HCT116 (cell line): ENCODE measurements at regions of chr17 and their contacts with region 1.

Region 1: GRCh38 chr17:64306850-64307463 is 43.9 kb upstream of the TEX2 start:
- DNase-seq: peak; percentile 70
- ATAC-seq: peak; percentile 83
- H3K4me3 ChIP-seq: no peak overlapping the region
- H3K27ac ChIP-seq: no peak overlapping the region
- H3K4me1 ChIP-seq: peaks cover 7 to 13% of the 10 kb centered on the region in 2 experiments
- H3K27me3 ChIP-seq: no peaks in the 10 kb centered on the region
- CTCF ChIP-seq: peak; percentile 90 to 99 (median 91)
- POLR2A ChIP-seq: no peak
- RAD21 ChIP-seq: peak; percentile 80

Region 2: DNA sequence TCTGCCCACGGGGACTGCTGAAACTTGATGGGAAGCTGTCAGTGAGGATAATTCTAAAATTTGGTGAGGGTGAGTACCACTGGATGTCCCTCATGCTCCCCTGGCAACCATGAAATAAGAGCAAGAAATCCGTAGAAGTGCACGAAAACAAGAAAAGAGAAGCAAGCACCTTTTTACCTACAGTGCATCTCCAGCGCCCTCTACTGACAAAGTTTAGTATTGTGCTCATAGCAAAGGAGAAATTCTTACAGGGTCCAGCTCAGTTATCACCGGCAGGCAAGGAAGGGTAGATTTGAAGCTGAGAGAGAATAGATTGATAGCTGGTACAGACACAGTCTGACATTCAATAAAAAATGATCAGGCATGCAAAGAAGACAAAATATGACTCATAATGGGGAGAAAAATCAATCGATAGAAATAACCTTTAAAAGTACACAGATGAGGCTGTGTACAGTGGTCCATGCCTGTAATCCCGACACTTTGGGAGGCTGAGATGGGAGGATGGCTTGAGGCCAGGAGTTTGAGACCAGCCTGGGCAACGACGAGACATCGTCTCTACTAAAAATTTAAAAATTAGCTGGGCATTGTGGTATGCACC is 15.6 kb before region 1 on chr17:
- CTCF ChIA-PET with region 1: interaction called, 12 read pairs
- POLR2A ChIA-PET with region 1: no interaction called
- RAD21 ChIA-PET with region 1: no interaction called
- intact Hi-C with region 1: no loop called
- DNase-seq: no peak
- ATAC-seq: peak; percentile 59
- H3K4me3 ChIP-seq: no peak overlapping the region
- H3K27ac ChIP-seq: no peak overlapping the region
- H3K4me1 ChIP-seq: no peaks in the 10 kb centered on the region
- H3K27me3 ChIP-seq: no peaks in the 10 kb centered on the region
- CTCF ChIP-seq: peak; percentile 23 to 97 (median 78); a peak in 4 of 6 replicates
- POLR2A ChIP-seq: no peak
- RAD21 ChIP-seq: peak; percentile 39

Region 3: GRCh38 chr17:64369007-64369893 is 62.3 kb after region 1 on chr17:
- CTCF ChIA-PET with region 1: no interaction called
- POLR2A ChIA-PET with region 1: no interaction called
- RAD21 ChIA-PET with region 1: no interaction called
- intact Hi-C with region 1: no loop called
- DNase-seq: no peak
- ATAC-seq: no peak
- H3K4me3 ChIP-seq: no peak overlapping the region
- H3K27ac ChIP-seq: no peak overlapping the region
- H3K4me1 ChIP-seq: no peaks in the 10 kb centered on the region
- H3K27me3 ChIP-seq: no peaks in the 10 kb centered on the region
- CTCF ChIP-seq: no peak
- POLR2A ChIP-seq: no peak
- RAD21 ChIP-seq: no peak